Endothelial cell of umbilical vein (primary cell): ENCODE measurements at regions of chr19 and their contacts with region 1.

Region 1: DNA sequence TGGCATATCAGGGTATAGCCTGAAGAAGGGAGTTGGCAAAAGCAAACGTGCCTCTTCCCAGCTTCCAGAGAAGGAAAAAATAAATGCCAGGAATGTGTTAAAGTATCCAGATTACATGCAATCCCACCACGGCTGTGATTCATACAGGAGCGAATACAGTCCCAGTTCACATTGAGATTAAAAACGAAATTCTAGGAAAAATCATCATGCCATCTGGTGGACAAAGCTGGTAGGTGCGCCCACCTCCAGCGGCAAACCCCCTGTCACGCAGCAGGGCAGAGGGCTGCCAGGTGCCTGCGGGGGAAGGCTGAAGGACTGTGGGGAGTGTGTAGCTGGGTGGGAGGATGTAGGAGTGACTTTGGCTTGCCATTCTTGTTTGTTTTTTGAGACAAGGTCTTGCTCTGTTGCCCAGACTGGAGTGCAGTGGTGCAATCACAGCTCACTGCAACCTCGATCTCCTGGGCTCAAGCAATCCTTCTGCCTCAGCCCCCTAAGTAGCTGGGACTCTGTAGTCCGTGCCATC is 6.4 kb upstream of the DMWD start:
- DNase-seq: peak; percentile 79
- H3K4me3 ChIP-seq: no peak overlapping the region
- H3K27ac ChIP-seq: no peak overlapping the region
- H3K4me1 ChIP-seq: no peaks in the 10 kb centered on the region
- H3K27me3 ChIP-seq: no peaks in the 10 kb centered on the region
- CTCF ChIP-seq: peak; percentile 70 to 77
- POLR2A ChIP-seq: no peak

Region 2: DNA sequence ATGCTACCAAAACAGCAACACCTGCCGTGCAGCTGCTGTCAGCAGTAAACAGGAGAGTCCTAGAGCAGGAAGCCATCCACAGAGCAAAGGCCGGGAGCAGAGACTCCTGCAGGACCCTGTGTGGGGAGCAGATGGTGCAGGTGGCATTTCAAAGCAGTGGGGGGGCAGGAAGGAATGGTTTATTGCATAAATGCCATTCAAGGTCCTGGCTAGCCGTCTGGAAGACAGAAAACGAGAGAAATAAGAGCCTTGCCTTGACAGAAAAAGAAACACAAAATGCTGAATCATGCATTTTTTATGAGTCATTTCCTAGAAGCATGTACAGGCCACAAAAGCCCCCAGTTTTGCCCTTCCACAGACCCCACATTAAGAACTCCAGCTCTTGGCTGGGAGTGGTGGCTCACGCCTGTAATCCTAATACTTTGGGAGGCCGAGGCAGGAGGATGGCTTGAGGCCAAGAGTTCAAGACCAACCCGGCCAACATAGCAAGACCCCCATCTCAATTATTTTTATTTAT is 10.6 kb after region 1 on chr19:
- CTCF ChIA-PET with region 1: interaction called, 12 read pairs
- POLR2A ChIA-PET with region 1: no interaction called
- dilution Hi-C with region 1: no loop called
- intact Hi-C with region 1: no loop called
- DNase-seq: peak; percentile 70
- H3K4me3 ChIP-seq: no peak overlapping the region
- H3K27ac ChIP-seq: peak overlapping the region; percentile 59
- H3K4me1 ChIP-seq: peaks cover 12% of the 10 kb centered on the region
- H3K27me3 ChIP-seq: no peaks in the 10 kb centered on the region
- CTCF ChIP-seq: no peak
- POLR2A ChIP-seq: no peak